ENCODE measurements at regions of chr2 and their contacts with region 1.

Region 1: DNA sequence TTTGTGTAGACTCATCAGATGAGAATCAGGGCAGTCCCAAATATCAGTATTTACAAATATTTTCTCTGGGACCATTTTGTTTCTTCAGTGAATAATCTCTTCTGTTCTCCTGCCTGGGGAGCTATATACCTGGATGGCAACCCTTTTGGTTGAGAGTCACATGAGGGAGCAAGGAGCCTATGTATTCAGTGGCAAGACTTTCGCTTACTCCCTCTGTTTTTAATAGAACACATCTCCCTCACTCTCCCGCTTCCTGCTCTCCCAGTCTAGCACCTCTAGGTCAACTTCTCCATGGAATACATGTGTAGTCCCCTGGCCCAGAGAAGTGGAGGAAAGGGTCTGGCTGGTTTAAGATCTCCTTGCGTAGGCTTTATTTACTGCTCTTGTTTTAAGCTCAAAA is 600.3 kb downstream of the CCDC85A start:
- DNase-seq: no peak
- ATAC-seq: no peak
- H3K4me3 ChIP-seq: no peak overlapping the region
- H3K27ac ChIP-seq: no peak overlapping the region
- H3K4me1 ChIP-seq: no peaks in the 10 kb centered on the region
- H3K27me3 ChIP-seq: no peaks in the 10 kb centered on the region
- CTCF ChIP-seq: no peak

Region 2: GRCh38 chr2:56589835-56590234 is 194.2 kb before region 1 on chr2:
- intact Hi-C with region 1: loop called (anchors 10 kb)
- DNase-seq: no peak
- ATAC-seq: no peak
- H3K4me3 ChIP-seq: no peak overlapping the region
- H3K27ac ChIP-seq: no peak overlapping the region
- H3K4me1 ChIP-seq: no peaks in the 10 kb centered on the region
- H3K27me3 ChIP-seq: no peaks in the 10 kb centered on the region
- CTCF ChIP-seq: no peak

Region 3: DNA sequence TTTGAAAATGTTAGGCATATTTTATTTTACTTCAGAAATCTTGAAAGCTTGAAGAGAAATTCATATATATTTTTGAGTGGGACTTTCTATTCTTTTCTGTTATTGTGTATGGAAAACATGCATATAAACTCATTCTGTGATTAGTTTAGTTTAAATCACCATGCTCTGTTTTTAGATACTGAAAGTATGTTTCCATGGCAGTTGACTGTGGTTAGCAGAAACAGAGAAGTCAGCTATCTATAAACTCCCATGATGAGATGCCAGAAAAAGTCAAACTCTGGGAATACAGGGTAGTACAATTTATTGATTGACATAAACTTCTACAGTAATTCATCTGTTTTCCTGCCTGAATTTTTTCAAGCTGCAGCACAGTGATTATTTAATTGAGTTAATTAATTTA is 357.2 kb after region 1 on chr2:
- intact Hi-C with region 1: no loop called
- DNase-seq: no peak
- ATAC-seq: no peak
- H3K4me3 ChIP-seq: no peak overlapping the region
- H3K27ac ChIP-seq: no peak overlapping the region
- H3K4me1 ChIP-seq: no peaks in the 10 kb centered on the region
- H3K27me3 ChIP-seq: no peaks in the 10 kb centered on the region
- CTCF ChIP-seq: no peak

Measured in lower lobe of right lung (tissue), 2 donors.